PC-9 (cell line): ENCODE measurements at regions of chr1 and their contacts with region 1.

Region 1: DNA sequence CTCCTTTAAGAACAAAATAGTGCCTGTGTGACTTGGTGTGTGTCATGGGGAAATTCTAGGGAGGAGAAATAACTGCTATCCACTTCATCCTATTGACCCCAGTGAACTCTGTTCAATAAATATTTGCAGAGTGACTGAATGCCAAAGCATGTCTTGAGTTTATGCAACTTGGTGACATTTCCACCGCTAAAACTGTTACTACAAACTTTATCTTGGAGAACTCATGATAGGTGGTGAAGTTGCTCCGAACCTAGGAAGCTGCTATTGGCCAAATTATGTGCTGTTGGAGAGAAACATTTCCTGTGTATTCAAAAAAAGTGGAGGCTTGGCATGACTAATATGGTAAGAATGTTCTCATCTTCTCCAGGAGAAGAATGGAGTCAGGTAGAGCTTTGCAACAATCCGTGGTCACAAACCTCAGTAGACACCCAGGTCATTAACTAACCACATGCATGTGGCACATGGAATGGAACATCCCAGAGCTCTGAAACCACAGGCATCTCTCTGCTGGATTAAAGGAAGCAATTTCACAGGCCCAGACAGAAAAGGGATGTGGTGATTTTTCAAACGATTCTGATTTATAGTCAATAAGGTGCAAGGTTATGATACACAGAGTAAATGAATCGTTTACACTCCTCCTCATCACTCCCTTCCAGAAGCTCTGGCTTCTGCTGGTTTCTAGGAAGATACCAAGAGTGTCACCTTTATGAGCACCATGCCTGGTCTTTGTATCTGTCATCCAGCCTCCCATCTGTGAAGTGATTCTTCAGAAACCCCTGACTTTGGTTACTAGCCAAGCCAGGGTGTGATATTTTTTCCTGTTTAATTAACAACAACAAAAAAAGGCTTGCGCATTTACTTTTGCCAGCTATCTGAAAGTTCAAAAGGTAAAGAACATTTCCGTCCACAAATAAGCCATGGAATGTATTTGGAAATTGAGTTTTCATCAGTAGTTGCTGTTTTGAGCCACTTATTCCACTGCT is 361.1 kb downstream of the TGFB2 start:
- DNase-seq: peak; percentile 85 to 99
- H3K4me3 ChIP-seq: peak overlapping the region; percentile 13; the same call in 1 of the 2 replicates
- H3K27ac ChIP-seq: peak overlapping the region; percentile 95
- H3K4me1 ChIP-seq: peaks cover 45% of the 10 kb centered on the region
- H3K27me3 ChIP-seq: no peaks in the 10 kb centered on the region
- CTCF ChIP-seq: no peak

Region 2: GRCh38 chr1:218377143-218377660 is 329.0 kb before region 1 on chr1:
- CTCF ChIA-PET with region 1: no interaction called
- POLR2A ChIA-PET with region 1: interaction called, 3 read pairs
- intact Hi-C with region 1: loop called (anchors 1 kb)
- DNase-seq: peak; percentile 87 to 96
- H3K4me3 ChIP-seq: peak overlapping the region; percentile 36
- H3K27ac ChIP-seq: peak overlapping the region; percentile 91
- H3K4me1 ChIP-seq: peaks cover 80% of the 10 kb centered on the region
- H3K27me3 ChIP-seq: no peaks in the 10 kb centered on the region
- CTCF ChIP-seq: no peak

Region 3: DNA sequence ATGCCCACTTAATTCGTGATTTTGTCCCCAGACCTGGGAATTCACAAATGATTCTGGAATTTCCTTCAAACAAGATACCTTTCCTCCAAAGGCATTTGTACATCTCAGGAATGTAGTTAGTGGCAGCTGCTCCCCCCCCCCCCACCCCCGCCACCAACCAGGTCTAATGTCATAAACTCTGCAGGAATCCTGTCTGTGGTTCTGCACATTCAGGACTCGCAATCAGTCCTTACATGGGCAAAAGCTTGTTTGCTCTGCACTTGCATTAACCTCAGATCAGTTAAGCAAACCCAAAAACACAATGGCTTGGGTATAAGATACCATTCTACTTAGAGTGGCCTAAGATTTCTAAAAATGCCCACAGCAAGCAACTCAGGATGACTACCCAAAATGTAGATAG is 217.2 kb before region 1 on chr1:
- CTCF ChIA-PET with region 1: no interaction called
- POLR2A ChIA-PET with region 1: interaction called, 6 read pairs
- intact Hi-C with region 1: loop called (anchors 2 kb)
- DNase-seq: peak; percentile 69 to 98
- H3K4me3 ChIP-seq: no peak overlapping the region
- H3K27ac ChIP-seq: peak overlapping the region; percentile 92
- H3K4me1 ChIP-seq: peaks cover 75% of the 10 kb centered on the region
- H3K27me3 ChIP-seq: no peaks in the 10 kb centered on the region
- CTCF ChIP-seq: no peak

Region 4: GRCh38 chr1:218592688-218593087 is 113.5 kb before region 1 on chr1:
- CTCF ChIA-PET with region 1: no interaction called
- POLR2A ChIA-PET with region 1: no interaction called
- intact Hi-C with region 1: loop called (anchors 1 kb)
- DNase-seq: peak; percentile 41 to 77
- H3K4me3 ChIP-seq: no peak overlapping the region
- H3K27ac ChIP-seq: peak overlapping the region; percentile 52
- H3K4me1 ChIP-seq: peaks cover 15% of the 10 kb centered on the region
- H3K27me3 ChIP-seq: no peaks in the 10 kb centered on the region
- CTCF ChIP-seq: no peak

Region 5: DNA sequence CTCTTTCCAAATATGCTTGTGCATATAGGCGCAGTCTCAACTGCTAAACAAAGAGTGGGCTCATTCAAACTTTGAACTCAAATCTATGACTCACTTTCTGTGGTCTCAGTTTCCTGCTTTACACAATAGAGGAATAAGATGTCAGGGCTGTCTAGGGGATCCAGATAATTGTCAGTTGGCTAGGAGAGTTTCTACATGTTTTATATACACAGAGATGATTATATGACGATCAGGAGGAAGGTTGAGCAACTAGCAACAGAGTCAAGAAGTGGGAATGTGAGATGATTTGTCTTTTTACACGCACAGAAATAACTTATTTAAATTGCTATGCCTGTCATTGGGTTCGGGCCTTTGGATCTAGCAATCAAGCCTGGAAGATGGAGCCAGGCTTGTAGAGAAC is 168.1 kb after region 1 on chr1:
- CTCF ChIA-PET with region 1: no interaction called
- POLR2A ChIA-PET with region 1: no interaction called
- intact Hi-C with region 1: loop called (anchors 5 kb)
- DNase-seq: peak; percentile 11 to 44
- H3K4me3 ChIP-seq: no peak overlapping the region
- H3K27ac ChIP-seq: no peak overlapping the region
- H3K4me1 ChIP-seq: peaks cover 14% of the 10 kb centered on the region; the same call in 1 of the 2 replicates
- H3K27me3 ChIP-seq: no peaks in the 10 kb centered on the region
- CTCF ChIP-seq: no peak

Region 6: GRCh38 chr1:219324629-219325367 is 618.6 kb after region 1 on chr1:
- CTCF ChIA-PET with region 1: no interaction called
- POLR2A ChIA-PET with region 1: no interaction called
- intact Hi-C with region 1: loop called (anchors 1 kb)
- DNase-seq: peak; percentile 44 to 94
- H3K4me3 ChIP-seq: no peak overlapping the region; the same call in 1 of the 2 replicates
- H3K27ac ChIP-seq: peak overlapping the region; percentile 63
- H3K4me1 ChIP-seq: peaks cover 31% of the 10 kb centered on the region
- H3K27me3 ChIP-seq: no peaks in the 10 kb centered on the region
- CTCF ChIP-seq: no peak